Caco-2 (cell line): ENCODE measurements at regions of chr17 and their contacts with region 1.

Region 1: DNA sequence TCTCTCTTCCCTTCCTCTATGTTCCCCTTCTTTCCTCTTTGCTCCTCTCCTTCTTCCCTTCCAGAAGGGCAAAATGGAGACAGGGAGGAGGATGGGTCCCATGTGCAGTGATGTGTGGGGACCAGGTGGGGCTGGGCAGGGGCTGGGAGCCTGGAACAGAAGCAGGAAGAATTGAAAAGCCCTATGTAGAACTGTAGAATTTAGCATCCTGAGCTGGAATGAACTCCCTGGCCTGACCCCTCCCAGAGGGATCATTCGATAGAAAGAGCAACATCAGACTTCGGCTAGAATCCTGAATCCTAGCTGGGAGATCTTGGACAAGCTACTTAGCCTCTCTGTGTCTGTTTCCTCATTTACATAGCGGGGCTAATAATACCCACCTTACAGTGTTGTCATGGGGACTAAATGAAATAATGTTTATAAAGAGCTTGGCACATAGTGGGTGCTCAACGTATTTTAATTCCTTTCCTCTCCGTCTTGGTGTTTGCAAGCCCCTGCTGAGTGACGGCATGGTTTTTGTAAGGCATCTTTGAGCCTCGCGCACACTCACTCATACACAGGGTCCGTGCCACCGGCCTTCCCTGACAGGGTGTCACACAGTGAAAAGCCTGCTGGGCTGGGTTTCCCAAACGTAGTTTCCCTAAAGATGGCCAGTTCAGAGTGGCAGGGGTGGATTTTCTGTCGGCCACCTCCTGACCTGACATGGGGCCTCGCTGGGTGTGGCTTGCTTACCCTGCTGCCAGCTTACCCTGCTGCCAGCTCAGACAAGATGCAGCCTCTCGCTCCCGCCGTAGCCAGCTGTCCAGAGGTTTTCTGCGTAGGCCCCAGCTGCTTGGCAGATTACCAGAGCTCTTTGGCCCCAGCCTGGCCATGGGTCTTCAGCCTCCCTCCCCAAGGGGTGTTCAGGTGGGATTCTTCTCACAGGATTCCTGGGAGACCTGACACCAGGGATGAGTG is 6.1 kb upstream of the ARHGAP23 start:
- DNase-seq: no peak
- H3K4me3 ChIP-seq: no peak overlapping the region
- H3K4me3 Mint-ChIP-seq: no peak overlapping the region
- H3K27ac Mint-ChIP-seq: no peak overlapping the region
- H3K4me1 ChIP-seq: peaks cover 2% of the 10 kb centered on the region; the same call in 1 of the 2 replicates
- H3K4me1 Mint-ChIP-seq: peaks cover 9% of the 10 kb centered on the region
- H3K27me3 ChIP-seq: no peaks in the 10 kb centered on the region
- H3K27me3 Mint-ChIP-seq: no peaks in the 10 kb centered on the region
- CTCF ChIP-seq: no peak

Region 2: GRCh38 chr17:37725601-37726146 is 696.5 kb before region 1 on chr17:
- CTCF ChIA-PET with region 1: no interaction called
- POLR2A ChIA-PET with region 1: no interaction called
- intact Hi-C with region 1: no loop called
- DNase-seq: peak; percentile 65 to 67
- H3K4me3 ChIP-seq: no peak overlapping the region
- H3K4me3 Mint-ChIP-seq: no peak overlapping the region
- H3K27ac Mint-ChIP-seq: peak overlapping the region; percentile 50
- H3K4me1 ChIP-seq: peaks cover 13% of the 10 kb centered on the region; the same call in 1 of the 2 replicates
- H3K4me1 Mint-ChIP-seq: peaks cover 16% of the 10 kb centered on the region
- H3K27me3 ChIP-seq: no peaks in the 10 kb centered on the region
- H3K27me3 Mint-ChIP-seq: no peaks in the 10 kb centered on the region
- CTCF ChIP-seq: no peak

Region 3: DNA sequence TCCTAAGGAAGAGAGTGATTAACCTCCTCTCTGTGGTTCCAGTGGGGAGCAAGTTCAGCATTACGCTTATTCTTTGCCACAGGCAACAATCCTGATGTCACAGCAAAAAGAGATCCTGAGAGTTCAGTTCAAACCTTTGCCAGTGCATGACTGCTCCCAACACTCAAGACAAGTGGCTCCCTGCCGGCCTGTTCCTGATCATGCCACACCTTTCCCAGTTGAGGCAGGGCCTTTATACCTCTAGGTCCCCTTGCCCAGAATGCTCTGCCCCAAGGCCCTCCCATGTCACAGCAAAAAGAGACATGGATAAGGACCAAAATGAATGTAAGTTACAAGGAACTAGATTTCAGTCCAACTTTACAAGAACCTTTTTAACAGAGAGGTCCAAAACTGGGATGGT is 24.9 kb before region 1 on chr17:
- CTCF ChIA-PET with region 1: no interaction called
- POLR2A ChIA-PET with region 1: no interaction called
- intact Hi-C with region 1: no loop called
- DNase-seq: no peak
- H3K4me3 ChIP-seq: no peak overlapping the region
- H3K4me3 Mint-ChIP-seq: no peak overlapping the region
- H3K27ac Mint-ChIP-seq: no peak overlapping the region
- H3K4me1 ChIP-seq: no peaks in the 10 kb centered on the region
- H3K4me1 Mint-ChIP-seq: no peaks in the 10 kb centered on the region
- H3K27me3 ChIP-seq: no peaks in the 10 kb centered on the region
- H3K27me3 Mint-ChIP-seq: no peaks in the 10 kb centered on the region
- CTCF ChIP-seq: no peak

Region 4: DNA sequence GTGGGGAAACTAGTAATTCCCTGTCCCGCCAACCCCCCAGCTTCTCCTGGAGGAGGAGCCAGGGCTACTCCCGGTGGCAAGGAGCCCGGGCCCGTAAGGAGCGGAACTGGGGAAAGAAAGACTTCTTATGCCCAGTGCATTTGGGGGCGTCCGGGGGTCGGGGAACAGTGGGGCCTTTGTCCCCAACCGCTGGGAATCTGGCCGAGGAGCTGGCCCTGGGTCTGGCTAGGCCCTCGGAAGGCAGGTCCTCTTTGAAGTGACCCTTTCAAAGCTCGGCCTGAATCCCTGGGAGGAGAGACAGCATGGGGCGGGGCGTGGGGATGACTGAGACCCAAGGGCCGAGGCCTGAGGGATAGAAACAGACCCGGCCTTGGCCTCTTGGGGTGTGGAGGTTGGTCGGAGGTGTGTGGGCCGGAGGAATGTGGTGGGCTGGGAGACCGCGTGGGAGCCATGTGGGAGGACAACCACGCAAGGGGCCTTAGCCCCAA is 12.1 kb after region 1 on chr17:
- CTCF ChIA-PET with region 1: no interaction called
- POLR2A ChIA-PET with region 1: no interaction called
- intact Hi-C with region 1: no loop called
- DNase-seq: no peak
- H3K4me3 ChIP-seq: no peak overlapping the region
- H3K4me3 Mint-ChIP-seq: no peak overlapping the region
- H3K27ac Mint-ChIP-seq: no peak overlapping the region
- H3K4me1 ChIP-seq: no peaks in the 10 kb centered on the region
- H3K4me1 Mint-ChIP-seq: no peaks in the 10 kb centered on the region
- H3K27me3 ChIP-seq: no peaks in the 10 kb centered on the region
- H3K27me3 Mint-ChIP-seq: no peaks in the 10 kb centered on the region
- CTCF ChIP-seq: no peak

Region 5: DNA sequence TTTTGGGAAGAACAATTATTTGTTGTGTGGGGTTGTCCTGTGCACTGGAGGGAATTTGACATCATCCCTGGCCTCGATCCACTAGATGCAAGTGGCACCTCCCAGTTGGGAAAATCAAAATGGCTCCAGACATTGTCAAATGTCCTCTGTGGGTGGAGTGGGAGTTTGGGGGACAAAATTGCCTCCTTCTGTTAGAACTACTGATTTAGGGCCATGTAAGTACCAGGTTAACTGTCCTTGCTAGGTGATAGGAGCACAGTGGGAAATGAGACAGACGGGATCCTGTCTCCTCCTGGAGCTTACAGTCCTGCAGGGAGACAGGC is 63.0 kb after region 1 on chr17:
- CTCF ChIA-PET with region 1: interaction called, 3 read pairs
- POLR2A ChIA-PET with region 1: no interaction called
- intact Hi-C with region 1: loop called (anchors 2 kb)
- DNase-seq: no peak
- H3K4me3 ChIP-seq: no peak overlapping the region
- H3K4me3 Mint-ChIP-seq: no peak overlapping the region
- H3K27ac Mint-ChIP-seq: no peak overlapping the region
- H3K4me1 ChIP-seq: no peaks in the 10 kb centered on the region
- H3K4me1 Mint-ChIP-seq: peaks cover 21% of the 10 kb centered on the region
- H3K27me3 ChIP-seq: no peaks in the 10 kb centered on the region
- H3K27me3 Mint-ChIP-seq: no peaks in the 10 kb centered on the region
- CTCF ChIP-seq: no peak